H1 (cell line): ENCODE measurements at regions of chr7 and their contacts with region 1.

Region 1: GRCh38 chr7:153193144-153193595 is 433.6 kb downstream of the ACTR3B start:
- DNase-seq: peak; percentile 34 to 87
- H3K4me3 ChIP-seq: no peak overlapping the region
- H3K27ac ChIP-seq: no peak overlapping the region
- H3K4me1 ChIP-seq: no peaks in the 10 kb centered on the region
- H3K27me3 ChIP-seq: no peaks in the 10 kb centered on the region
- CTCF ChIP-seq: peak; percentile 88 to 92 (median 89)
- EP300 ChIP-seq: no peak
- POLR2A ChIP-seq: no peak
- RAD21 ChIP-seq: peak; percentile 92

Region 2: GRCh38 chr7:152894273-152895170 is 298.6 kb before region 1 on chr7:
- CTCF ChIA-PET with region 1: interaction called, 10 read pairs
- POLR2A ChIA-PET with region 1: no interaction called
- DNase-seq: peak in 1 of 2 experiments; percentile 85
- H3K4me3 ChIP-seq: no peak overlapping the region
- H3K27ac ChIP-seq: no peak overlapping the region
- H3K4me1 ChIP-seq: peaks cover 0 to 1% (median 0%) of the 10 kb centered on the region in 4 experiments; a peak in 2 of 7 replicates
- H3K27me3 ChIP-seq: no peaks in the 10 kb centered on the region
- CTCF ChIP-seq: peak; percentile 74 to 92 (median 77)
- EP300 ChIP-seq: no peak
- POLR2A ChIP-seq: no peak
- RAD21 ChIP-seq: peak; percentile 94 to 96

Region 3: GRCh38 chr7:152911850-152912249 is 281.3 kb before region 1 on chr7:
- CTCF ChIA-PET with region 1: no interaction called
- POLR2A ChIA-PET with region 1: no interaction called
- DNase-seq: no peak
- H3K4me3 ChIP-seq: no peak overlapping the region
- H3K27ac ChIP-seq: no peak overlapping the region
- H3K4me1 ChIP-seq: peaks cover 0 to 3% (median 0%) of the 10 kb centered on the region in 4 experiments; a peak in 1 of 7 replicates
- H3K27me3 ChIP-seq: no peaks in the 10 kb centered on the region; a peak in 1 of 7 replicates
- CTCF ChIP-seq: no peak
- EP300 ChIP-seq: no peak
- POLR2A ChIP-seq: no peak
- RAD21 ChIP-seq: no peak

Region 4: DNA sequence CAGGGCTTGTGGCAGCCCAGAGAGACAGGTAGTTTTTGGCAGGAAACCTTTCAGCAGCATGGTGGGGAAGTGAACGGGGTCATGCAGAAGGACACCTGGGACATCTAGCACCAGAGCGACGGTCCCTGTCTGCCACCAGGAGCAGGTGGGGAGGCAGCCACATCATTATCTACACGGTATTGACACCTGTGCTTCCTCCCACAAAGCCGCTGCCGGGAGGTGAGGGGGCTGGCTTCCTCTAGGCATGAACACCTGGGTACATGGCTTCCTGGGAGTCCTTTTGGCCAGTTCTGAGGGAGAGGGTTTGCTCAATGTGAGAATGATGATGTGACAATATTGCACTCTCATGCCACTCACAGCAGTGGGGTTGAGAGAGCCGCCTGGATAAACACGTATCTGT is 158.4 kb before region 1 on chr7:
- CTCF ChIA-PET with region 1: no interaction called
- POLR2A ChIA-PET with region 1: no interaction called
- DNase-seq: no peak
- H3K4me3 ChIP-seq: no peak overlapping the region
- H3K27ac ChIP-seq: no peak overlapping the region
- H3K4me1 ChIP-seq: no peaks in the 10 kb centered on the region
- H3K27me3 ChIP-seq: no peaks in the 10 kb centered on the region
- CTCF ChIP-seq: no peak
- EP300 ChIP-seq: no peak
- POLR2A ChIP-seq: no peak
- RAD21 ChIP-seq: no peak

Region 5: GRCh38 chr7:153152801-153153417 is 40.3 kb before region 1 on chr7:
- CTCF ChIA-PET with region 1: interaction called, 10 read pairs
- POLR2A ChIA-PET with region 1: no interaction called
- DNase-seq: no peak
- H3K4me3 ChIP-seq: no peak overlapping the region
- H3K27ac ChIP-seq: no peak overlapping the region
- H3K4me1 ChIP-seq: peaks cover 2 to 8% (median 2%) of the 10 kb centered on the region in 4 experiments; a peak in 2 of 7 replicates
- H3K27me3 ChIP-seq: no peaks in the 10 kb centered on the region
- CTCF ChIP-seq: no peak
- EP300 ChIP-seq: no peak
- POLR2A ChIP-seq: no peak
- RAD21 ChIP-seq: no peak

Region 6: GRCh38 chr7:153370092-153370491 is 176.9 kb after region 1 on chr7:
- CTCF ChIA-PET with region 1: interaction called, 13 read pairs
- POLR2A ChIA-PET with region 1: no interaction called
- DNase-seq: peak; percentile 29 to 48
- H3K4me3 ChIP-seq: no peak overlapping the region
- H3K27ac ChIP-seq: no peak overlapping the region
- H3K4me1 ChIP-seq: no peaks in the 10 kb centered on the region
- H3K27me3 ChIP-seq: no peaks in the 10 kb centered on the region
- CTCF ChIP-seq: peak; percentile 54 to 62 (median 60)
- EP300 ChIP-seq: no peak
- POLR2A ChIP-seq: no peak
- RAD21 ChIP-seq: peak; percentile 76 to 85

Region 7: DNA sequence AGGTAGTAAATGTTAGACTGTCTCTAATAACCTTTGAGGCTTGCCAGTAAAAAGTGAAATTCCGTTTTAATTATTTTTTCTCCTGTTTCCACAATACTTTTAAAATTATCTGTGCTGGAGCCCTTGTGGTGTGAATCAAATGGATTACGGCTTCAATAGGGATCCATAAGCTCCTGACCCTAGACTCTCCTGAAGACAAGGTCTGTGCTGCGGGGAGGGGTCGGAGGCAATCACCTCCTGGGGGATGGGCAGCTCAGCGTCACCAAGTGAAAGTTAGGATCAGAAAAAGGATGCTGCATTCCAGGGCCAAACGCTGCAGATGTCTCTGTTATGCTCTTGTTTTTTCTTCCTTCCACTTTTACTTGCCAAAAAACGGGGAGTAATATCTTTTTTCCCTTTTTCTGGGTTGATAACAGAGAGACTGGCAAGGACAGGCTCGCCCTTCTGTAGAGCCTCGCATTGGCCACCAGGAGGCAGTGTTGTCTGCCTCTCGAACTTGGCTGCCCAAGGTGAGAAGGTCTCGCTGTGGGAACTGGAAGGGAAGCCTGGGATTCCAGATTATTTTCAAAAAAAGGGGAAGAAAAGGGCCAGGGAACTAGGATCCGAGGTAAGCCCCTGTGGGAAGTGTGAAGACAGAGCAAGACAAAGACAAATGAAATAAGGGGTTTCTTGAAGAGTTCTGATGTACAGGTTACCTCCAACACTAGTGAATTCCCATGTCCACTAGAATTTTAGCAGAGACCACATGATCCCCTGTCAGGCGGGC is 188.3 kb after region 1 on chr7:
- CTCF ChIA-PET with region 1: interaction called, 17 read pairs
- POLR2A ChIA-PET with region 1: no interaction called
- DNase-seq: peak; percentile 25 to 70
- H3K4me3 ChIP-seq: peak overlapping the region in 3 of 4 experiments; percentile 20 to 50 (median 34); a peak in 5 of 8 replicates
- H3K27ac ChIP-seq: no peak overlapping the region
- H3K4me1 ChIP-seq: peaks cover 0 to 2% (median 0%) of the 10 kb centered on the region in 4 experiments; a peak in 3 of 7 replicates
- H3K27me3 ChIP-seq: no peaks in the 10 kb centered on the region
- CTCF ChIP-seq: peak; percentile 81 to 90 (median 82)
- EP300 ChIP-seq: no peak
- POLR2A ChIP-seq: no peak
- RAD21 ChIP-seq: peak; percentile 98 to 99

Region 8: DNA sequence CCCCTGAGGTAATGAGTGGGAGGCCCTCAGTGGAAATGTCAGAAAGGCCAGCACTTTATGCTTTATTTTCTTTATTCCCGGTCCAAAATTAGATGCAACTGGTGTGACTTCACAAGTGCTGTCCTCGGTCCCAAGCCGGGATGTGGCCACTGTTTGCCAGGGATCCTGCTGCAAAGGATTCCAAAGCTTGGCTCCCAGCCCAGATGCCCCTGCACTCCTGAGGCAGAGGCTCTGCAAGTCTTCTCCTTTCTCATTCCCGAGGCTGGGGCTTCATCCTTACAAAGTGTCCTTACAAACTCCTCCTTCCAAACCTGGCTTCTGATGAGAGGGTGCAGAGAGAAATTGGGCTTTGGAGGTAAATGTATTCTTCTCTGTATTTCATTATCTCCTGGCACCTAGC is 314.7 kb after region 1 on chr7:
- CTCF ChIA-PET with region 1: no interaction called
- POLR2A ChIA-PET with region 1: no interaction called
- DNase-seq: no peak
- H3K4me3 ChIP-seq: no peak overlapping the region
- H3K27ac ChIP-seq: no peak overlapping the region
- H3K4me1 ChIP-seq: no peaks in the 10 kb centered on the region
- H3K27me3 ChIP-seq: no peaks in the 10 kb centered on the region
- CTCF ChIP-seq: no peak
- EP300 ChIP-seq: no peak
- POLR2A ChIP-seq: no peak
- RAD21 ChIP-seq: no peak